ENCODE measurements at regions of chrX and their contacts with region 1.

Region 1: GRCh38 chrX:19372170-19372546 is 28.4 kb downstream of the PDHA1 start:
- DNase-seq: peak; percentile 81
- ATAC-seq: peak; percentile 92
- H3K4me3 Mint-ChIP-seq: peak overlapping the region; percentile 78
- H3K27ac Mint-ChIP-seq: peak overlapping the region; percentile 46
- H3K4me1 Mint-ChIP-seq: peaks cover 5% of the 10 kb centered on the region
- H3K27me3 Mint-ChIP-seq: no peaks in the 10 kb centered on the region
- CTCF ChIP-seq: peak; percentile 72

Region 2: GRCh38 chrX:19382555-19383145 is 10.5 kb after region 1 on chrX:
- CTCF ChIA-PET with region 1: interaction called, 10 read pairs
- POLR2A ChIA-PET with region 1: no interaction called
- intact Hi-C with region 1: no loop called
- DNase-seq: peak; percentile 74
- ATAC-seq: peak; percentile 84
- H3K4me3 Mint-ChIP-seq: no peak overlapping the region
- H3K27ac Mint-ChIP-seq: no peak overlapping the region
- H3K4me1 Mint-ChIP-seq: no peaks in the 10 kb centered on the region
- H3K27me3 Mint-ChIP-seq: peaks cover 4% of the 10 kb centered on the region
- CTCF ChIP-seq: no peak

Region 3: GRCh38 chrX:19514791-19515614 is 142.8 kb after region 1 on chrX and contains the start of gene MAP3K15:
- CTCF ChIA-PET with region 1: interaction called, 6 read pairs
- POLR2A ChIA-PET with region 1: interaction called, 3 read pairs
- intact Hi-C with region 1: loop called (anchors 5 kb)
- DNase-seq: peak; percentile 24
- ATAC-seq: peak; percentile 68
- H3K4me3 Mint-ChIP-seq: peak within 1 kb of the TSS; percentile 60
- H3K27ac Mint-ChIP-seq: no peak within 1 kb of the TSS
- H3K4me1 Mint-ChIP-seq: peaks cover 2% of the 10 kb centered on the region
- H3K27me3 Mint-ChIP-seq: peaks cover 31% of the 10 kb centered on the region
- CTCF ChIP-seq: no peak
- total RNA-seq, gene MAP3K15: 1.8 to 2.2 TPM

Measured in activated CD8-positive, alpha-beta T cell treated with anti-CD3 and anti-CD28 coated beads for 36 hours (primary cell).